ENCODE measurements at regions of chr1 and their contacts with region 1.

Region 1: DNA sequence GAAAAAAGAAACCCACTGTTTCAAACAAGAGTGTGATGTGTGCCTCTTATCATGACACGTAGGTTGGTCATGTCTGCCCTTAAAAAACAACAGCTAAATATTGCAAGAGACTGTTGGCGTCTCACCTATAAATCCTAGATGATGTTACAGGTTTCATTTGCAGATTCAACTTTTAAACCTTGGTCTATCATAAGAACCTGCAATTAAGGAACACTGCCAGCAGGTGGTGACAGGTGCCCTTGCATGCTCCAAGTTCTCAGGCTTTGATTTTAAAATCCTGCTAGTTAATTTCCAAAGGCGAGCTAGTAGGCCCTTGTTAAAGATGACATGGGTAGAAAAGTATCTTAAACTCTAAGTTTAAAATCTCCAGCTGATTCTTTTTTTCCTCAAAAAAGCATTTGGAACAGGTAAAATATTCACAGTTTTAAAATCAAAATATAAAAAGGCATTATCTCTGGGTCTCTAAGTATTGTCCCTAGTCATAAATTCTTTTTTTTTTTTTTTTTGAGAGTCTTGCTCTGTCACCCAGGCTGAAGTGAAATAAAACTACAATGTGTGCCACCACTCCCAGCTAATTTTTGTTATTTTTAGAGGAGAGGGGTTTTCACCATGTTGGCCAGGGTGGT is 39.1 kb downstream of the CLSTN1 start:
- DNase-seq: no peak
- H3K4me3 ChIP-seq: no peak overlapping the region
- H3K27ac ChIP-seq: no peak overlapping the region
- H3K4me1 ChIP-seq: peaks cover 0 to 5% (median 1%) of the 10 kb centered on the region in 4 experiments; a peak in 3 of 7 replicates
- H3K27me3 ChIP-seq: no peaks in the 10 kb centered on the region
- CTCF ChIP-seq: peak in 2 of 3 experiments; percentile 76 to 79; a peak in 3 of 4 replicates
- EP300 ChIP-seq: no peak
- POLR2A ChIP-seq: no peak
- RAD21 ChIP-seq: peak; percentile 86 to 89

Region 2: DNA sequence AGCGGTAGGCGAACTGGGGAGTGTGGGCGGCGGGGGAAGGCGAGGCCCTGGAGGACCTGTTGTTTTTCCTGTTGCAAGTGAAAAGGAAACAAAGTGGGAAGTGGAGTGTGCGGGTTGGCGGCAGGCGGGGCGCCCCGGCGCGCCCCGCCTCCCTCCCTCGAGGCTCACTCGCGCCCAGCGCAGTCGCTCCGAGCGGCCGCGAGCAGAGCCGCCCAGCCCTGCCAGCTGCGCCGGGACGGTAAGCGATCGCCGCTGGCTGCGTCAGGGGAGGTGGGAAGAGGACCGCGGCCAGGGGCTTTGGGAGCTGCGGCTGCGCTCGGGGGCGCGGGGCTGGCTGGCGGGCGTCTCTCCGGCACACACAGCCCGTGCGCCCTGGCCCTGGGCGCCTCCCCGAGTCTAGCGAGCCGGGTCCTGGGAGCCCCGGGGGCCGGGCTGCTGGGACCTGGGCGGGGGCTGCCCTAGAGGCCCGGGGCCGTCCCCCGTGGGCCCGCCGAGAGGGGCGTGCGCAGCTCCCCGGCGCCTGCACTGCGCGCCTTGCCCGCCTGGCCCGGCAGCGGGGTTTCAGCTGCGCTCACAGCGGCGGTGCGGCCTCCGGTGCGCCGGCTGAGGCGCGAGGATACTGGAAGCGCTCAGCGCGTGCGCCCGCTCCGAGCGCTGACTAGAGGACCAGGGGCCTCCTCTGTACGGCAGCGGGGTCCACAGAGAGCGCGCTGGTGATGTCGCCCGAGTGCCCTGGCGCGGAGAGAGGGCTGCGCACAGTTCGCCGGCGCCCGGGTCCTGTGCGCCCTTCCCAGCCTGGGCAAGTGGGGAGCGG is 132.8 kb before region 1 on chr1 and contains the start of gene PIK3CD:
- CTCF ChIA-PET with region 1: no interaction called
- POLR2A ChIA-PET with region 1: no interaction called
- DNase-seq: peak in 1 of 2 experiments; percentile 76
- H3K4me3 ChIP-seq: peak within 1 kb of the TSS; percentile 52 to 71 (median 58)
- H3K27ac ChIP-seq: no peak within 1 kb of the TSS
- H3K4me1 ChIP-seq: peaks cover 0 to 3% (median 0%) of the 10 kb centered on the region in 4 experiments; a peak in 3 of 7 replicates
- H3K27me3 ChIP-seq: peaks cover 5 to 33% (median 29%) of the 10 kb centered on the region in 4 experiments
- CTCF ChIP-seq: no peak
- EP300 ChIP-seq: no peak
- POLR2A ChIP-seq: no peak
- RAD21 ChIP-seq: no peak
- total RNA-seq, gene PIK3CD: 24.1 and 24.8 TPM in 2 replicates

Region 3: GRCh38 chr1:9758559-9759121 is 26.0 kb before region 1 on chr1:
- CTCF ChIA-PET with region 1: interaction called, 18 read pairs
- POLR2A ChIA-PET with region 1: no interaction called
- DNase-seq: no peak
- H3K4me3 ChIP-seq: no peak overlapping the region
- H3K27ac ChIP-seq: no peak overlapping the region
- H3K4me1 ChIP-seq: peaks cover 8 to 14% (median 11%) of the 10 kb centered on the region in 4 experiments
- H3K27me3 ChIP-seq: no peaks in the 10 kb centered on the region; a peak in 1 of 7 replicates
- CTCF ChIP-seq: no peak
- EP300 ChIP-seq: no peak
- POLR2A ChIP-seq: no peak
- RAD21 ChIP-seq: no peak

Region 4: DNA sequence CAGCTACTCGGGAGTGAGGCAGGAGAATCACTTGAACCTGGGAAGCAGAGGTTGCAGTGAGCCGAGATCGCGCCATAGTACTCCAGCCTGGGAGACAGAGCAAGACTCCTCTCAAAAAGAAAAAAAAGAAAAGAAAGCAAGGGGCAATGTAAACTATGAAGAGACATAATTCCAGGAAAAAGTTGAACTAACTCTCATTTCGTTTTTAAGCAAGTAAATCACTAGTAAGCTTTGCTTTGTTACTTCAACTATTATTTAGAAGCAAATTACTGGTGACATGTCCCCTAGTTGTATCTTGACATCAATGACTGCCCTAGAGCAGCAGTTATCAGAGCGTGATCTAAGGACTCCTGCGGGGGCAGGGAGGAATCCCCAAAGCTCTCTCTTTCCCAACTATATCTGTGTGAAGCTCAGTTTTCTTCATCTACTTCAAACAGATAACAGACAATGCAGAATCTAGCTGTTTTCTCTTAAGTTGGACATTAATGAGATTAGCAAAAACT is 20.4 kb after region 1 on chr1:
- CTCF ChIA-PET with region 1: interaction called, 90 read pairs
- POLR2A ChIA-PET with region 1: no interaction called
- DNase-seq: no peak
- H3K4me3 ChIP-seq: no peak overlapping the region
- H3K27ac ChIP-seq: no peak overlapping the region
- H3K4me1 ChIP-seq: peaks cover 0 to 7% (median 4%) of the 10 kb centered on the region in 4 experiments; a peak in 4 of 7 replicates
- H3K27me3 ChIP-seq: no peaks in the 10 kb centered on the region
- CTCF ChIP-seq: no peak
- EP300 ChIP-seq: no peak
- POLR2A ChIP-seq: no peak
- RAD21 ChIP-seq: no peak

Region 5: DNA sequence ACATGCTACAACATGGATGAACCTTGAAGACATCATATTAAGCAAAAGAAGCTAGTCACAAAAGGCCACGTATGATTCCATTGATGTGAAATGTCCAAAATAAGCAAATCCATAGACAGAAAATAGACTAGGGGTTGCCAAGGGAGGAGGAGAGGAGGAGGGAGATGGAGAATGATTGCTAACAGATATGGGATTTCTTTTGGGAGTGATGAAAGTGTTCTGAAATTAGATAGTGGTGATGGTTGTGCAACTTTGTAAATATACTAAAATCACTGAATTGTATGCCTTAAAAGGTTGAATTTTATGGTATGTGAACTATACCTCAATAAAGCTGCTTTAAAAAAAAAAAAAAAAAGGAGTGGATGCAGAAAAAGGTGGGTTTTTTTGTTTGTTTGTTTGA is 31.6 kb after region 1 on chr1:
- CTCF ChIA-PET with region 1: interaction called, 45 read pairs
- POLR2A ChIA-PET with region 1: interaction called, 3 read pairs
- DNase-seq: no peak
- H3K4me3 ChIP-seq: no peak overlapping the region
- H3K27ac ChIP-seq: no peak overlapping the region
- H3K4me1 ChIP-seq: peaks cover 0 to 7% (median 2%) of the 10 kb centered on the region in 4 experiments; a peak in 2 of 7 replicates
- H3K27me3 ChIP-seq: no peaks in the 10 kb centered on the region
- CTCF ChIP-seq: no peak
- EP300 ChIP-seq: no peak
- POLR2A ChIP-seq: no peak
- RAD21 ChIP-seq: no peak

Region 6: DNA sequence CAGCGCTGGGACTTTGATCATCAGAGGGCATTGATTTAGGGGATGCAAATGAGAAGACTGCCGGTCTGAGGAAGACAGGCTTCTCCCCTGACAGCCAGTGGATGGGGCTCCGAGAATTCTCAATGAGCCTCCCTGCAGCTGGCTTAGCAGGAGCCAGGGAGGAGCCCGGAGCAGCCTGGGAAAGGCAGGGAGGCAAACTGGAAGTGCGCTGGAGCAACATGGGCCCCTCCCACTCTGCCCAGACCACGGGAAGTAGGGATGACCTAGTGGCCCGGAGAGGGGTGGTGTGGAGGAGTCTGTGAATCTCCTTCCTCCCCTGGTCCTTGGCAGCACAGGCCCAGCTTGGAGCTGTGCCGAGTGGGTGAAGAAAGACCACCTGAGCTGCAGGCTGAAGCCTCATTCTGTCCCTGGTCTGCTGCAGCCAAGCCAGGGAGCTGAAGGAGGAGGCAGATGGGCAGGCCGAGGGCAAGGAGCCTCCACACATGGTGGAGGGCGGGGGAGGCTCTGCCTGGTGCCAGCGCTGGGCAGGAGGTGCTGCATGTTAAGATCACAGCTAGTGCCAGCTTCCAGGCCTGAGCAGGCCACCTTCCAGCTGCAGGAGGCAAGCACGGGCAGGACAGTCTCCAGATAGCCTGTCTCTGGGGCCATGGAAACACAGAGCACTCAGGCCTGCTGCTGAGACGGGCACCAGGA is 51.3 kb after region 1 on chr1:
- CTCF ChIA-PET with region 1: interaction called, 66 read pairs
- POLR2A ChIA-PET with region 1: interaction called, 3 read pairs
- DNase-seq: no peak
- H3K4me3 ChIP-seq: peak overlapping the region in 1 of 4 experiments; percentile 6; a peak in 2 of 8 replicates
- H3K27ac ChIP-seq: no peak overlapping the region
- H3K4me1 ChIP-seq: peaks cover 4 to 12% (median 11%) of the 10 kb centered on the region in 4 experiments; a peak in 6 of 7 replicates
- H3K27me3 ChIP-seq: peaks cover 0 to 4% (median 0%) of the 10 kb centered on the region in 4 experiments; a peak in 3 of 7 replicates
- CTCF ChIP-seq: 0 out of 4 replicates have a peak, but pooled peaks of 1 of the 3 experiments have one; percentile 6
- EP300 ChIP-seq: peak in 1 of 2 experiments; percentile 97; a peak in 1 of 3 replicates
- POLR2A ChIP-seq: no peak
- RAD21 ChIP-seq: peak; percentile 33 to 50; a peak in 3 of 4 replicates

Region 7: DNA sequence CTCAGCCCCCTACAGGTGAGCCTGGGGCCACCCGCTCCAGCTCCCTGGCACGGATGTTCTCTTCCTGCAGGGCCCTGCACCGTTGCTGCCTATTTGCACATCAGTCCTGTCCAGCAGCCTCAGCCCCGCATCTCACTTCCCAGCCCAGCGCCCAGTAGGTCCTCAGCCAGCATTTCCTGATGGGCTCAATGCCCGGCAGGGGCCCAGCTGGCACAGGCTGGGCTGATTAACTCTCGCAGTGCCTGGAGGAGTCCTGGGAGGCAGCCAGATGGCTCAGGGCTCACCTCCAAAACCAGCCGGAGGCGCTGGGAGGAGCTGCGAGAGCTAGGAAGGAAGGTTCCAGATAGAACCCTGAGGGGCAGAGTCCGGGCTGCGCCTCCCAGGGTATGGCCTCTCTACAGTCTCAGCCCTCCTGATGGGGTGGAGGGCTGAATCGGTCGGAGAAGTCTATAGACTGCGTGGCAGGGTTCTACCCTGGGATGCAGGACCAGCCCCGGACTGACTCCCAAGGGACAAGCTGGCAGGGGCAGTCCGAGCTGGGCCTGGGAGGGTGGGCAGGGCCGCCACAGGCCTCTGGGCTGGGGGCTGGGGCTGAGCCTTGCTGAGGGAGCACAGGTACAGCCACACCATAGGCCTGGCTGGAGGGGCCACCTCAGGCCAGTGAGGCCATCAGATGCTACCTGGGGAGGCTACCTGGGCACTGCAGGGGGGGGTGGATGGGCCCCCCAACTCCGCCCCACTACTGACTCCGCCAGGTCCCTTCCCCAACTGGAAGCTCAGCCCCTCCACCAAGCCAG is 58.4 kb after region 1 on chr1:
- CTCF ChIA-PET with region 1: interaction called, 29 read pairs
- POLR2A ChIA-PET with region 1: interaction called, 3 read pairs
- DNase-seq: no peak
- H3K4me3 ChIP-seq: no peak overlapping the region
- H3K27ac ChIP-seq: no peak overlapping the region
- H3K4me1 ChIP-seq: peaks cover 0 to 22% (median 16%) of the 10 kb centered on the region in 4 experiments; a peak in 6 of 7 replicates
- H3K27me3 ChIP-seq: no peaks in the 10 kb centered on the region
- CTCF ChIP-seq: peak in 1 of 3 experiments; percentile 32; a peak in 1 of 4 replicates
- EP300 ChIP-seq: no peak
- POLR2A ChIP-seq: no peak
- RAD21 ChIP-seq: no peak

Measured in H1 (cell line).